SK-N-SH (cell line): ENCODE measurements at regions of chr19 and their contacts with region 1.

Region 1: GRCh38 chr19:58558623-58559274 is 338 bp upstream of the UBE2M start:
- DNase-seq: peak; percentile 91
- H3K4me3 ChIP-seq: peak overlapping the region; percentile 91 to 96
- H3K27ac ChIP-seq: peak overlapping the region; percentile 99 to 100
- H3K4me1 ChIP-seq: peaks cover 20 to 71% of the 10 kb centered on the region in 2 experiments; a peak in 3 of 4 replicates
- H3K27me3 ChIP-seq: no peaks in the 10 kb centered on the region
- CTCF ChIP-seq: no peak
- EP300 ChIP-seq: no peak
- RAD21 ChIP-seq: no peak

Region 2: DNA sequence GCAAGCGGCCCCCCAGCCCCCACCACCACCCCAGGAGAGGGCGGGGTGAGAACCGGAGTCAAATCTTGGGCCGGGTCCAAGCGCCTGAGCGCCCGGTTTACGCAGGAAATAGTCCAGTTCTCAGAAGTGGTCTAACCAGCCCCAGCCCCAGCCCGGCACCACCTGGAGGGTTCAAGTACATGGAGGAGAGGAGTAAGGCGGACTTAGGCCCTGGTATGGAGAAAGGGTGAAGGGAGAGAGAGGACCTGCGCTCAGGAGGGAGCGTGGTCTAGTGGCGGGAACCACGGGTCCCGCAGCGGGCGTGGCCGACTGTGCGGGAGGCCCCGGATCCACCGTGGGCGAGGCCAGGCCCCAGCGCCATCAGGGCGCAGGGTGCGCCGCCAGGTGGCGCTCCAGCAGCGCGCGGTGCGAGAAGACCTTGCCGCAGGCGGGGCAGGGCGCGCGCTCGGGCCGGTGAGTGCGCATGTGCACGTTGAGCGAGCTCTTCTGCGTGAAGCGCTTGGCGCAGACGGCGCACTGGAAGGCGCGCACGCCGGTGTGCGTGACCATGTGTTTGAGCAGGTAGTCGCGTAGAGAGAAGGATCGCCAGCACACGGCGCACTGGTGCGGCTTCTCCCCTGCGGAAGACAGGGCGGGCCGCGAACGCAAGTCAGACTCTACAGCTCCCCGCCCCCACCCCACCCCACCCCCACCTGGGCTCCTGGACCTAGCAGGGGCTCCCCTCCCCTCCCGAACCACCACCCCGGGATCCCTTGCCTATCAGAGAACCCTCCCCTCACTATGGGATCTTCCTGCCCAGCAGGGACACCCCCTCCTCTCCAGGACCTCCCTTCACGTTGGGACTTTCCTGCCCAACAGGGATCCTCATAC is 44.8 kb before region 1 on chr19:
- CTCF ChIA-PET with region 1: interaction called, 81 read pairs
- POLR2A ChIA-PET with region 1: interaction called, 49 read pairs
- DNase-seq: peak; percentile 99
- H3K4me3 ChIP-seq: peak overlapping the region; percentile 35 to 47; a peak in 3 of 4 replicates
- H3K27ac ChIP-seq: peak overlapping the region; percentile 41 to 85
- H3K4me1 ChIP-seq: peaks cover 0 to 34% of the 10 kb centered on the region in 2 experiments; a peak in 1 of 4 replicates
- H3K27me3 ChIP-seq: no peaks in the 10 kb centered on the region
- CTCF ChIP-seq: peak; percentile 85
- EP300 ChIP-seq: no peak
- RAD21 ChIP-seq: peak; percentile 69

Region 3: GRCh38 chr19:58543826-58544590 is 14.7 kb before region 1 on chr19 and contains the start of gene TRIM28:
- CTCF ChIA-PET with region 1: interaction called, 10 read pairs
- POLR2A ChIA-PET with region 1: interaction called, 42 read pairs
- DNase-seq: peak; percentile 100
- H3K4me3 ChIP-seq: peak within 1 kb of the TSS; percentile 94 to 97
- H3K27ac ChIP-seq: peak within 1 kb of the TSS; percentile 91 to 97
- H3K4me1 ChIP-seq: peaks cover 11 to 20% of the 10 kb centered on the region in 2 experiments; a peak in 3 of 4 replicates
- H3K27me3 ChIP-seq: no peaks in the 10 kb centered on the region; the same call in 1 of the 2 replicates
- CTCF ChIP-seq: no peak
- EP300 ChIP-seq: no peak
- RAD21 ChIP-seq: 0 out of 2 replicates have a peak, but pooled peaks have one; percentile 6
- polyA plus RNA-seq, gene TRIM28: 321 and 594 TPM in 2 replicates

Region 4: DNA sequence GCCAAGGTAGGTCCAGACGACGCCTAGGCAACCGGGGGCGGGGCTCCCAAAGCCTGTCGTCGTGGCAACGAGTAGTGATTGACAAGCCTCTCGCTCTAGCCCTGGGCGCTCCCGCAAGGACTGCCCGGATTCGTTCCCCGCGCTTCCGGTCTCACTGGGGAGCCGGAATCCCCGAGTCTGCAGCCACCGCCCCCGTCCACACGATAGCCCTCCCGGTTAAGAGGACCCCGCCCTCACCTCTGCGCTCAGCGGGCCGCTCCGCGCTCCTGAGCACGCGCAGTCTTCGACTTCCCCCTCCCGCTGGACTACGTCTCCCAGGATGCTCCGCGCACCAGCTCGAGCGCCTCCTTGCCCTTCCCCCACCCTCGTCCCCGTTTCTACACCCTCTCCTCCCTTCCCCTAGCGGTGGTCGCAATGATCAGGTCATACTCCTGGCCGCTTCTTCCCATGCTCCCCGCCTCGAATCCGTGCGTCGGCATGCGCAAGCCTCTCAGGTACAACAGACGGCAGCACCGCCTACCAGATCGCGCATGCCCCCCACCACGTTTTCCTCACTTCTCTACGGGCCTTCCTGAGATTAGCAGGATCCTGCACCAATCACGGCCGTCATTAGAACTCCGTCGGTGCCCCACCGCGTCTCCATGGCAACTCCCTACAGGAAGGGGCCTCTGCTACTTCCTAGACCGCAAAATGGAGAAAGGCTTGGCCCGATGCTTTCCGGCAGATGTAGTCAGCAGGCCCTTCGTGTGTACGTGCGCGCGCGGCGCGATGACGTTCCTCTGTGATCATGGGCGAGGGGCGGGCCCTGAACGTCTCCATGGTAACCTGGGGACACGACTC is 14.3 kb after region 1 on chr19 and contains the start of gene MZF1:
- CTCF ChIA-PET with region 1: no interaction called
- POLR2A ChIA-PET with region 1: interaction called, 15 read pairs
- DNase-seq: peak; percentile 94
- H3K4me3 ChIP-seq: peak within 1 kb of the TSS; percentile 64 to 79
- H3K27ac ChIP-seq: peak within 1 kb of the TSS; percentile 97
- H3K4me1 ChIP-seq: peaks cover 4 to 22% of the 10 kb centered on the region in 2 experiments; a peak in 2 of 4 replicates
- H3K27me3 ChIP-seq: no peaks in the 10 kb centered on the region
- CTCF ChIP-seq: no peak; the same call in 1 of the 2 replicates
- EP300 ChIP-seq: no peak
- RAD21 ChIP-seq: no peak
- polyA plus RNA-seq, gene MZF1: 31.8 and 38.4 TPM in 2 replicates